WTC11 (cell line): ENCODE measurements at regions of chr16 and their contacts with region 1.

Region 1: DNA sequence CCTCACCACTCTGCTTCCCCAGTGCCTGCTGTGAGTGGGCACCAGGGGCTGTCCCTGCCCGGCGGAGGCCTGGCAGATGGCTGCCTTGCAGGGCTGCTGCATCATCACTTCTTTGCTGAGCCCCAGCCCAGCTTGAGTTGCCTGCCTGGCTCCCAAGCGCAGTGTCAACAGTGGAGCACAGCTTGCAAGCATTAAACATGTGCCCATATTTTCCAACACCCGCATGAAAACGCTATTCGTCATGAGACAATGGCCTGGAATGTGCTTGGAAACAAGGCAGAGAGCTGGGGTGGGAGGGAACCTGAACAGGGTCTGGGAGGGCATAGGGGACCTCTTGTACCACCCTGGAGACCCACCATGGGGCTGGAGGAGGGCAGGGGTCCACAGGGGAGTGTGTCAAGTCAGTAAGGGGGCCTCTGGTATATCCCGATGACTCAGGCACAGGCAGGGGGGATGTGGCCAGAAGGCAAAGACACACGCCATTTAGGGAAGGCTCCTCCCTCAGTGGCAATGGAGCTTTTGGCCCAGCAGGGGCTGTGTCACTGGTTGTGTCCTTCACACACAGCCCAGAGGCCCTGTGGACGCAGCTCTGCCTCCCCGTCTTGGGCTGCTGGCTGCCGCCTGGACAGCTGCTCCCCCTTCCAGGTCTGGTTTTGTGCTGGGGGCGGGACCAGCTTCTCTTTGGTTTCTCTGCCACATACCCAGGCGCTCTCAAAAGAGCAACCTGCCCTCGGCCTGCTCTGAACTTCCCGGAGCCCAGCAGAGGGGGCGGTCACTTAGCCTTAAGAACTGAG is 17.4 kb upstream of the MTSS2 start:
- DNase-seq: peak; percentile 45
- ATAC-seq: peak; percentile 67
- H3K4me3 Mint-ChIP-seq: no peak overlapping the region
- H3K27ac Mint-ChIP-seq: peak overlapping the region; percentile 45; the same call in 1 of the 2 replicates
- H3K4me1 Mint-ChIP-seq: peaks cover 18% of the 10 kb centered on the region
- H3K27me3 Mint-ChIP-seq: no peaks in the 10 kb centered on the region
- CTCF ChIP-seq: no peak

Region 2: GRCh38 chr16:70685938-70686375 is 17.3 kb before region 1 on chr16 and contains the start of gene MTSS2:
- CTCF ChIA-PET with region 1: interaction called, 11 read pairs
- POLR2A ChIA-PET with region 1: interaction called, 3 read pairs
- DNase-seq: peak; percentile 82
- ATAC-seq: peak; percentile 55
- H3K4me3 Mint-ChIP-seq: peak within 1 kb of the TSS; percentile 65
- H3K27ac Mint-ChIP-seq: peak within 1 kb of the TSS; percentile 70
- H3K4me1 Mint-ChIP-seq: peaks cover 26% of the 10 kb centered on the region
- H3K27me3 Mint-ChIP-seq: no peaks in the 10 kb centered on the region
- CTCF ChIP-seq: no peak
- total RNA-seq, gene MTSS2: 28.3 to 34.9 TPM (median 31.2 TPM) in 3 replicates